AG04450 (cell line): ENCODE measurements at regions of chr9 and their contacts with region 1.

Region 1: GRCh38 chr9:33076358-33077004 is at the start of gene SMU1:
- DNase-seq: peak; percentile 89
- H3K4me3 ChIP-seq: peak within 1 kb of the TSS; percentile 98
- H3K27ac ChIP-seq: peak within 1 kb of the TSS; percentile 90
- H3K27me3 ChIP-seq: no peaks in the 10 kb centered on the region
- CTCF ChIP-seq: no peak
- polyA plus RNA-seq, gene SMU1: 17.1 and 19.6 TPM in 2 replicates

Region 2: GRCh38 chr9:33092634-33093033 is 16.2 kb after region 1 on chr9:
- CTCF ChIA-PET with region 1: no interaction called
- POLR2A ChIA-PET with region 1: no interaction called
- DNase-seq: no peak
- H3K4me3 ChIP-seq: no peak overlapping the region
- H3K27ac ChIP-seq: no peak overlapping the region
- H3K27me3 ChIP-seq: no peaks in the 10 kb centered on the region
- CTCF ChIP-seq: no peak

Region 3: DNA sequence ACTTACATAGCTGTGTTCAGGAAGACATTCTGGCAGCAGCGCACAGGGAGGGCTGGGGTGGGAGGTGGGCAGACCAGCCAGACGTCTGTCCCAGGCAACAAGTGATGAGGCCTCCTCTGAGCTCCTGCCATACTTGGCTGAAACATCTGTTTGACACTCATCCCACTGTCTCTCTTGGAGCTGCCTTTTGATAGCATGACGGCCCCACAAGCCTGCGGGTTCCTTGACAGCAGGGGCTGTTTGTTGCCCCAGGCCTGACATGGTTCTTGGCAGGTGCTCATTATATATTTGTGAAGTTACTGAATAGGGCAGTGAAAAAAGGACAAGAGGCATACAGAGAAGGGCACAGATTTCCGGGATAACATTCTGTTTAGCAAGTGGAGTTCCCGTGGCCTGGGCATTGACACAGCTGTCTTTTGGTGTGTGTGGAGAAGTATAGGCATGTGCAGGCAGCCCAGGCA is 112.9 kb after region 1 on chr9:
- CTCF ChIA-PET with region 1: interaction called, 3 read pairs
- POLR2A ChIA-PET with region 1: interaction called, 13 read pairs
- DNase-seq: no peak
- H3K4me3 ChIP-seq: no peak overlapping the region
- H3K27ac ChIP-seq: no peak overlapping the region
- H3K27me3 ChIP-seq: no peaks in the 10 kb centered on the region
- CTCF ChIP-seq: no peak

Region 4: DNA sequence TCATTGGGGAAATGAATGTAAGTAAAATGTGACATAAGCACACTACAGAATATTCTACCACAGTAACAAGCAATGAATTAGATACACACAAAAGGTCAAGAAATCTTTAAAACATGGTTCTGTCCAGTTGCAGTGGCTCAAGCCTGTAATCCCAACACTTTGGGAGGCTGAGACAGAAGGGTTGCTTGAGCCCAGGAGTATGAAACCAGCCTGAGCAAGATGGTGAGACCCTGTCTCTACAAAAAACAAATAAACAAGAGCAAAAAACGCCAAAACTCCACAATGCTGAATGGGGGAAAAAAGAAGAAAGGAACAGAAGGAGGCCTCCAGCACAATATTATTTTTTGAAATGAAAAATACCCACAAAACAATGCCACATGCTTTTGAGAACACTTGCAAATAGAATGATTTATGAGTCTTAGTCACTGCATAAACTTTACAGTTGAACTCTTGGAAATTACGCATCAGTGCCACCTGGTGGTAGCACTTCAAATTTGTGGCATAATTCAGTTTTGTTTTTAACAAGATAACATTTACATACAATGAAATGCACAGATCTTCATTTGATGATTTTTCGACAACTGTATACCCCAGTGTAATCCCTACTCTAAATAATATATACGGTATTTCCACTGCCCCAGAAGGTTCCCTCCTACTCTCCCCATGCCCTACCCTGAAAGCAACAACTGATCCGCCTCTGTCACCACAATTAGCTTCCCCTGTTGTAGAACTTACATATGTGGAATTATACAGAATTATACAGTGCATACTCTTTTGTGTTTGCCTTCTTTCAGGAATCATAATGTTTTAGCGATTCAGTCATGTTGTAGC is 149.1 kb after region 1 on chr9:
- CTCF ChIA-PET with region 1: interaction called, 52 read pairs
- POLR2A ChIA-PET with region 1: interaction called, 7 read pairs
- DNase-seq: peak; percentile 64
- H3K4me3 ChIP-seq: no peak overlapping the region
- H3K27ac ChIP-seq: no peak overlapping the region
- H3K27me3 ChIP-seq: no peaks in the 10 kb centered on the region
- CTCF ChIP-seq: peak; percentile 65